B cell (primary cell): ENCODE measurements at regions of chr19 and their contacts with region 1.

Region 1: GRCh38 chr19:43700395-43701000 is 15.4 kb upstream of the IRGC start:
- DNase-seq: peak; percentile 56
- ATAC-seq: peak; percentile 21
- H3K4me3 ChIP-seq: peak overlapping the region in 1 of 5 experiments; percentile 61
- H3K4me3 Mint-ChIP-seq: peak overlapping the region; percentile 92
- H3K27ac ChIP-seq: peak overlapping the region; percentile 34 to 83
- H3K27ac Mint-ChIP-seq: peak overlapping the region; percentile 92
- H3K4me1 ChIP-seq: peaks cover 26 to 29% of the 10 kb centered on the region in 2 donors
- H3K4me1 Mint-ChIP-seq: peaks cover 28% of the 10 kb centered on the region
- H3K27me3 ChIP-seq: peaks cover 0 to 17% (median 0%) of the 10 kb centered on the region in 4 experiments
- H3K27me3 Mint-ChIP-seq: peaks cover 20% of the 10 kb centered on the region
- CTCF ChIP-seq: no peak

Region 2: DNA sequence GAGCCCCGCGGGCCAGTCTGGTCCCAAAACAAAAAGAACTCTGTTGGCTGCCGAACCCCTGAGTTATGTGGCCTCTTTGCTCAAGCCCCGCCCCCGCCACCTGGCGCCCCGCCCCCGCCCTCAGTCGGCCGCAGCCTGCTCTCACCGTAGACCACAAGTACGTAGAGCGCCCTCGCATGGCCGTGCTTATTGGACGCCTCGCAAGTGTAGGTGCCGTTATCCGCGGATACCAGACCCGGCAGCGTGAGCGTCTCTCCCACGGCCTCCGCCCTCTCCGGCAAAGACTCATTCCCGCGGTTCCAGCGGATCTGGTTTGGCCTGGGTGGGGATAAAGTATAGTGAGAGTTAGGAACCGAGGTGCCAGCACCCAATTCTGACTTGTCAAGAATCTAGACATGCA is 75.6 kb before region 1 on chr19:
- CTCF ChIA-PET with region 1: no interaction called
- POLR2A ChIA-PET with region 1: no interaction called
- intact Hi-C with region 1: no loop called
- DNase-seq: peak; percentile 86
- ATAC-seq: peak; percentile 75
- H3K4me3 ChIP-seq: no peak overlapping the region
- H3K4me3 Mint-ChIP-seq: no peak overlapping the region
- H3K27ac ChIP-seq: no peak overlapping the region
- H3K27ac Mint-ChIP-seq: no peak overlapping the region
- H3K4me1 ChIP-seq: peaks cover 14% of the 10 kb centered on the region in 2 donors
- H3K4me1 Mint-ChIP-seq: peaks cover 19% of the 10 kb centered on the region
- H3K27me3 ChIP-seq: peaks cover 0 to 14% (median 7%) of the 10 kb centered on the region in 4 experiments
- H3K27me3 Mint-ChIP-seq: peaks cover 15% of the 10 kb centered on the region
- CTCF ChIP-seq: peak; percentile 61

Region 3: DNA sequence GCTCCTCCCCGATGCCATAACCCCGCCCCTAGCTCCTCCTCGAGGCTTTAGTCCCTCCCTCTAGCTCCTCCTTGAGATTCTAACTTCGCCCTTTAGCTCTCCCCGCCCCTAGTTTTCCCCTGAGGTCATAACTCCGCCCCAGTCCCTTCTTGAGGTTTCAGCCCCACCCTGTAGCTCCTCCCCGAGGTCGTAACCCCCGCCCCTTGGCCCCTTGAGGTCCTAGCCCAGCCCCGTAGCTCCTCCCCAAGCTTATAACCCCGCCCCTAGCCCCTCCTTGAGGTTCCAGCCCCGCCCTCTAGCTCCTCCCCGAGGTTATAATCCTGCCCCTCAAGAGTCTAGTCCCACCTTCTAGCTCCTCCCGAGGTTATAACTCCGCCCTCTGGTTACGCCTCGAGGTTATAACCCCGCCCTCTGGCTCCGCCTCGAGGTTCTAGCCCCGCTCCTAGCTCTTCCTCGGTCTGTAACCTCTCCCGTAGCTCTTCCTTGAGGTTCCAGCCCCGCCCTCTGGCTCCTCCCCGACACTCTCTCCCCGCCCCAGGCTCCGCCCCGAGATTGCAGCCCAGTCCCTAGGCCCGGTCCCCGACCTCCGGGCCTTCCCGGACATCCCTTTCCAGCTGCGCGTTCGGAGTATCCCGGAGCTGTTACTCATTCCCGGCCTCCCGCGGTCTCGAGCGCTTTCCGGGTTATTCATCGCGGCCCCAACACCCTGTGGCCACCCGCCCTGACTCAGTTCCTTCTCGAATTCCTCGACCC is 31.9 kb before region 1 on chr19:
- CTCF ChIA-PET with region 1: no interaction called
- POLR2A ChIA-PET with region 1: no interaction called
- intact Hi-C with region 1: loop called (anchors 1 kb)
- DNase-seq: peak; percentile 92
- ATAC-seq: peak; percentile 85
- H3K4me3 ChIP-seq: peak overlapping the region; percentile 35 to 79 (median 59)
- H3K4me3 Mint-ChIP-seq: peak overlapping the region; percentile 84
- H3K27ac ChIP-seq: no peak overlapping the region
- H3K27ac Mint-ChIP-seq: peak overlapping the region; percentile 39
- H3K4me1 ChIP-seq: peaks cover 35 to 42% of the 10 kb centered on the region in 2 donors
- H3K4me1 Mint-ChIP-seq: peaks cover 37% of the 10 kb centered on the region
- H3K27me3 ChIP-seq: peaks cover 0 to 27% (median 7%) of the 10 kb centered on the region in 4 experiments
- H3K27me3 Mint-ChIP-seq: peaks cover 14% of the 10 kb centered on the region
- CTCF ChIP-seq: no peak

Region 4: GRCh38 chr19:43725468-43725867 is 25.0 kb after region 1 on chr19:
- CTCF ChIA-PET with region 1: no interaction called
- POLR2A ChIA-PET with region 1: no interaction called
- intact Hi-C with region 1: loop called (anchors 2 kb)
- DNase-seq: peak; percentile 72
- ATAC-seq: peak; percentile 71
- H3K4me3 ChIP-seq: no peak overlapping the region
- H3K4me3 Mint-ChIP-seq: peak overlapping the region; percentile 4
- H3K27ac ChIP-seq: peak overlapping the region in 1 of 2 donors; percentile 30
- H3K27ac Mint-ChIP-seq: peak overlapping the region; percentile 64
- H3K4me1 ChIP-seq: peaks cover 36 to 38% of the 10 kb centered on the region in 2 donors
- H3K4me1 Mint-ChIP-seq: peaks cover 26% of the 10 kb centered on the region
- H3K27me3 ChIP-seq: no peaks in the 10 kb centered on the region
- H3K27me3 Mint-ChIP-seq: no peaks in the 10 kb centered on the region
- CTCF ChIP-seq: no peak

Region 5: DNA sequence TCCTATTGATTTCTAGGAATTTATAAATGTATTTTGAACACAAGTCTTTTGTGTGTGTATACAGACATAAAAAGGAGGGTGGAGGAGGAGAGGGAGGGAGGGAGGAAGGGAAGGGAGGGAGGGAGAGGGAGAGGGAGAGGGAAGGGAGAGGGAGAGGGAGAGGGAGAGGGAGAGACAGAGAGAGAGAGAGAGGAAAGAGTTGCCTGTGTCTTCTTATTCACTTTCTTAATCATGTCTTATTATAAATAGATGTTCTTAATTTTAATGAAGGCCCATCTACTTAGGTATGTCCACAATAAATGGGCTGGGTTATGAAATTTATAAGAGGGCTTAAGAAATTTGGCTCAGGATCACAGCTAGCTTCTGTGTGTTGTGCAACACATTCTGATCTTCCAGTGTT is 195.2 kb after region 1 on chr19:
- CTCF ChIA-PET with region 1: no interaction called
- POLR2A ChIA-PET with region 1: no interaction called
- intact Hi-C with region 1: no loop called
- DNase-seq: no peak
- ATAC-seq: no peak
- H3K4me3 ChIP-seq: no peak overlapping the region
- H3K4me3 Mint-ChIP-seq: no peak overlapping the region
- H3K27ac ChIP-seq: no peak overlapping the region
- H3K27ac Mint-ChIP-seq: no peak overlapping the region
- H3K4me1 ChIP-seq: no peaks in the 10 kb centered on the region
- H3K4me1 Mint-ChIP-seq: peaks cover 3% of the 10 kb centered on the region
- H3K27me3 ChIP-seq: no peaks in the 10 kb centered on the region
- H3K27me3 Mint-ChIP-seq: no peaks in the 10 kb centered on the region
- CTCF ChIP-seq: no peak